MCF 10A (cell line): ENCODE measurements at regions of chr19 and their contacts with region 1.

Region 1: GRCh38 chr19:49570138-49570856 is 10.1 kb downstream of the NOSIP start:
- DNase-seq: peak; percentile 91
- H3K4me3 Mint-ChIP-seq: no peak overlapping the region
- H3K27ac Mint-ChIP-seq: no peak overlapping the region
- H3K4me1 Mint-ChIP-seq: peaks cover 16% of the 10 kb centered on the region
- H3K27me3 Mint-ChIP-seq: no peaks in the 10 kb centered on the region
- CTCF ChIP-seq: peak; percentile 97

Region 2: GRCh38 chr19:49363268-49364082 is 206.8 kb before region 1 on chr19 and contains the start of gene DKKL1:
- CTCF ChIA-PET with region 1: no interaction called
- POLR2A ChIA-PET with region 1: no interaction called
- intact Hi-C with region 1: no loop called
- DNase-seq: peak; percentile 100
- H3K4me3 Mint-ChIP-seq: no peak within 1 kb of the TSS
- H3K27ac Mint-ChIP-seq: no peak within 1 kb of the TSS
- H3K4me1 Mint-ChIP-seq: no peaks in the 10 kb centered on the region
- H3K27me3 Mint-ChIP-seq: no peaks in the 10 kb centered on the region
- CTCF ChIP-seq: peak; percentile 4
- total RNA-seq, gene DKKL1: 0.56 TPM in 1 of 2 replicates, not detected in the other

Region 3: DNA sequence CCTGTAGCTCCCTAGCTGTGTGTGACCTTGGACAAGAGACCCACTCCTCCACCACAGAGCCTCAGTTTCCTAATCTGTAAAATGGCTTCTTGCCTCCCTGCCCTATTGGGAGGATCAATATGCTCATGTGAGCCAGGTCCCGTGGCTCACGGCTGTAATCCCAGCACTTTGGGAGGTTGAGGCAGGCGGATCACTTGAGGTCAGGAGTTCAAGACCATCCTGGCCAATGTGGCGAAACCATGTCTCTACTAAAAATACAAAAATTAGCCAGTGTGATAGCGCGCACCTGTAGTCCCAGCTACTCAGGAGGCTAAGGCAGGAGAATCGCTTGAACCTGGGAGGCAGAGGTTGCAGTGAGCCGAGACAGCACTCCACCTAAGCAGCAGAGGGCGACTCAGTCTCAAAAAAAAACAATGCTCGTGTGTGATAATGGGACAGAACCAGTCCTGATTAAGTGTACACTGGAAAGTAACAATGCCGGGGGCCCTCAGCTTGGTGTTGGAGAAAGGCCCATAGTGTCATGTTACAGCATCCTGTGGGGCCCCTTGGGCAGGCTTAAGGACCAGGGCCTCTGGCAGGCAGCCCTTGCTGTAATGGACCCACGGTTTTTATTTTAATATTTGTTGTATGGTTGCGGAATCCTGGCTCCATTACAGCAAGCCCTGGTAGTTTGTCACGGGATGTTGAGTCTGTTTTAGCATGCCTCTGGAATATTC is 67.3 kb before region 1 on chr19:
- CTCF ChIA-PET with region 1: interaction called, 49 read pairs
- POLR2A ChIA-PET with region 1: interaction called, 4 read pairs
- intact Hi-C with region 1: loop called (anchors 1 kb)
- DNase-seq: peak; percentile 73
- H3K4me3 Mint-ChIP-seq: no peak overlapping the region
- H3K27ac Mint-ChIP-seq: no peak overlapping the region
- H3K4me1 Mint-ChIP-seq: peaks cover 6% of the 10 kb centered on the region
- H3K27me3 Mint-ChIP-seq: no peaks in the 10 kb centered on the region
- CTCF ChIP-seq: peak; percentile 44

Region 4: GRCh38 chr19:49528211-49528771 is 42.0 kb before region 1 on chr19:
- CTCF ChIA-PET with region 1: no interaction called
- POLR2A ChIA-PET with region 1: no interaction called
- intact Hi-C with region 1: no loop called
- DNase-seq: no peak
- H3K4me3 Mint-ChIP-seq: no peak overlapping the region
- H3K27ac Mint-ChIP-seq: no peak overlapping the region
- H3K4me1 Mint-ChIP-seq: peaks cover 4% of the 10 kb centered on the region
- H3K27me3 Mint-ChIP-seq: peaks cover 19% of the 10 kb centered on the region
- CTCF ChIP-seq: no peak

Region 5: GRCh38 chr19:49555600-49556411 is 14.5 kb before region 1 on chr19:
- CTCF ChIA-PET with region 1: interaction called, 89 read pairs
- POLR2A ChIA-PET with region 1: interaction called, 3 read pairs
- intact Hi-C with region 1: no loop called
- DNase-seq: no peak
- H3K4me3 Mint-ChIP-seq: no peak overlapping the region
- H3K27ac Mint-ChIP-seq: no peak overlapping the region
- H3K4me1 Mint-ChIP-seq: peaks cover 12% of the 10 kb centered on the region
- H3K27me3 Mint-ChIP-seq: no peaks in the 10 kb centered on the region
- CTCF ChIP-seq: no peak

Region 6: DNA sequence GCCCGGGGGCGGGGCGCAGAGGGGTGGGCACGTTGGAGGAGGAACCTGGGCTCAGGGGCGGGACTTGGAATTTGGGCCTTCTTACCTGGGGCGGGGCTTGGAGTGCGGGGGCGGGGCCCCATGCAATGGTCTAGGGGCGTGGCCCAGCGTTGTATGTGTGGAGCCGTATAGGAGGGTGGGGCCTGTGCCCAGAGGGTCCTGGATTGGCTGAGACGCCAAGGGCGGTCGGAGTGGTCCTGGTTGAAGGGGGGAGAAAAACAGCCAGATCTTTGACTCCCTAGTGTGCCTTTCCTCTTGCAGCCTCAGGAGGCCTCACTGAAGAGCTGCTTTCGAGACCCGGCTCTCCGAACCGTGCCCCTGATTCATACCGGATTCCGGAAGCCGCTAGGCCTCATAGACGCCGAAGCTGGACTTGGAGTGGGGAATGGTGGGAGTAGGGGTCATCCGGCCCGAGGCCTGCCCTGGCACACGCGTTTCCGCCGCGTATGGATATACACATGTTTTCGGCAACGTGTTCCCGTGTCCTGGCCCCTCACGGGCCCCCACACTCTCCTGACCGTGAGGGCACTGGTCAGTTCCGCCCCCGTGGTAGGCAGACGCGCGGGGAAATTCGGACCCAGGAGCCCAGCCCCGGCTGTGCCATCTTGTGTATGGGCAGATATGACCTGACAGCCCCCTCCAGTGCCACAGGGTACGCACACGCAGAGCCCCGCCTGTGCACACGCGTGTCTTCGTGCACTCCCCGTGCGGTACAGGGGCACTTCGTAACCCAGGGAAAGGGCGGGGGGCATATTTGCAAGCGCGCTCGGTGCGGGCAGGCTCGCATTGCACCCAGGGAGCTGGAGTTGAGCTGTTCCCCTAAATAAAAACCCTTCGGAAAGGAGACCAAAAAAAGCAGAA is 20.0 kb after region 1 on chr19:
- CTCF ChIA-PET with region 1: interaction called, 11 read pairs
- POLR2A ChIA-PET with region 1: interaction called, 3 read pairs
- intact Hi-C with region 1: no loop called
- DNase-seq: peak; percentile 99
- H3K4me3 Mint-ChIP-seq: peak overlapping the region; percentile 71
- H3K27ac Mint-ChIP-seq: peak overlapping the region; percentile 33
- H3K4me1 Mint-ChIP-seq: peaks cover 27% of the 10 kb centered on the region
- H3K27me3 Mint-ChIP-seq: no peaks in the 10 kb centered on the region
- CTCF ChIP-seq: no peak